HepG2 (cell line): ENCODE measurements at regions of chr4 and their contacts with region 1.

Region 1: GRCh38 chr4:16745009-16745635 is 153.3 kb downstream of the LDB2 start:
- DNase-seq: no peak
- ATAC-seq: no peak
- H3K4me3 ChIP-seq: no peak overlapping the region
- H3K27ac ChIP-seq: no peak overlapping the region
- H3K4me1 ChIP-seq: no peaks in the 10 kb centered on the region
- H3K27me3 ChIP-seq: no peaks in the 10 kb centered on the region
- CTCF ChIP-seq: no peak
- EP300 ChIP-seq: no peak
- POLR2A ChIP-seq: no peak
- RAD21 ChIP-seq: no peak

Region 2: DNA sequence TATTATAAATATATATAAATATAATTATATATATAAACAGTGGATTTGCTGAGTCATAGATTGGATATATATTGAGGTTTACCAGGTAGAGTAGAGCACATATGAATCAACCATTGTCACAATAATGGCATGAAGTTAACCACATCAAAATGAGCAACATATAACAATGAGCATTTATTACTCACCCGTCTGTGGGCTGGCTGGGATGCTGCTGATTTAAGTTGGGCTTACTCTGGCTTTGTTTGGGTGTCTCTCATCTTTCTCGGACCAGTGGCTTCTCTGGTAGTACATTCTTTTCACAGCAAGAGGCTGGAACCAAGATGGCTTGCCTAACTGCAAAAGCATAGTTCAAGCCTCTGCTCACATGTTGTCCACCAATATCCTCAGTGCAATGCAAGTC is 407.2 kb before region 1 on chr4:
- CTCF ChIA-PET with region 1: no interaction called
- POLR2A ChIA-PET with region 1: no interaction called
- in situ Hi-C with region 1: loop called (anchors 25 kb)
- intact Hi-C with region 1: no loop called
- DNase-seq: no peak
- ATAC-seq: no peak
- H3K4me3 ChIP-seq: no peak overlapping the region
- H3K27ac ChIP-seq: no peak overlapping the region
- H3K4me1 ChIP-seq: no peaks in the 10 kb centered on the region
- H3K27me3 ChIP-seq: no peaks in the 10 kb centered on the region
- CTCF ChIP-seq: no peak
- EP300 ChIP-seq: no peak
- POLR2A ChIP-seq: no peak
- RAD21 ChIP-seq: no peak

Region 3: DNA sequence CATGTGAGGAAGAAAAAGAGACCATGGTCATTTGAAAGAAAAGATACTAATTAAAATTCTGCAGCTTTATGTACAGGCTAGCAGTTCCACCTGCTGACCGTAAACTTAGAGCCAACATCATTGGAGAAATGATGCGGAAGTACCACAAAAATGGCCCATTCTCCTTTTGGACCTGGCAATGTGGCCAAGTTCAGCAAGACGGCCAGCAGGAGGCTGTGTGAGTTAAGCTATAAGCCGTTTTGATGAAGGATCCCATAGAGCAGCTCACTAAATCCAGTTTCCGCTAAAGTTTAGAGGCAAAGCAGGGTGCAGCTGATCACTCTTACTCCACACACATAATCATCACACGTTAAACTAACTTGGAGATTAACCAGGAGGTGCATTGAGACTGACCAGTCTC is 19.5 kb after region 1 on chr4:
- CTCF ChIA-PET with region 1: no interaction called
- POLR2A ChIA-PET with region 1: no interaction called
- in situ Hi-C with region 1: no loop called
- intact Hi-C with region 1: no loop called
- DNase-seq: peak; percentile 9
- ATAC-seq: peak; percentile 81
- H3K4me3 ChIP-seq: no peak overlapping the region
- H3K27ac ChIP-seq: no peak overlapping the region
- H3K4me1 ChIP-seq: no peaks in the 10 kb centered on the region
- H3K27me3 ChIP-seq: no peaks in the 10 kb centered on the region; a peak in 1 of 5 replicates
- CTCF ChIP-seq: peak; percentile 62
- EP300 ChIP-seq: no peak
- POLR2A ChIP-seq: no peak
- RAD21 ChIP-seq: no peak

Region 4: DNA sequence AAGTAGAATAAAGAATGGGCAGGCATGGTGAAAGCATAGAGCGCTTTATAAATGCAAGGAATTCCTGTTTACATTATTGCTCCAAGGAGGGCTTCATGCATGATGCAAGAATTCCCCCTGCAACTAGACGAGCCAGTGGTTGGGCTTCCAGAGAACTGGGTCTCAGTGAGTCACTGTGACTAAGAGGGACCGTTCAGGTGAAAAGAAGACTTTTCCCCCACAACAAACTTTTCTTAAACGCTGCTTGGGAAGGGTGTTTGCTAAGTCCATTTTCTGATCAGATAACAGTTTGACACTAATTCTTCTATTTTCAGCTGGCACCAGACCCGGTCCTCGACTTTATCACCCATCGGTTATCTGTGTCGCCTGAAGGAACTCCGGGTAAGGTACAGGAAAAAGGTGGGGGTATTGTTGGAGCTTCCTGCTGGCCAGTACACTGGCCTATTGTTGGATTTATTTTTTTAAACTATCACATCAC is 113.2 kb after region 1 on chr4:
- CTCF ChIA-PET with region 1: no interaction called
- POLR2A ChIA-PET with region 1: no interaction called
- in situ Hi-C with region 1: no loop called
- intact Hi-C with region 1: no loop called
- DNase-seq: no peak
- ATAC-seq: no peak
- H3K4me3 ChIP-seq: no peak overlapping the region
- H3K27ac ChIP-seq: no peak overlapping the region
- H3K4me1 ChIP-seq: no peaks in the 10 kb centered on the region
- H3K27me3 ChIP-seq: 0 out of 5 replicates have a peak, but pooled peaks cover 0 to 5% of the 10 kb centered on the region in 2 experiments
- CTCF ChIP-seq: no peak
- EP300 ChIP-seq: no peak
- POLR2A ChIP-seq: no peak
- RAD21 ChIP-seq: no peak